ENCODE measurements at regions of chr12 and their contacts with region 1.

Region 1: GRCh38 chr12:53079226-53080117 is at the start of gene SPRYD3:
- DNase-seq: peak; percentile 99
- ATAC-seq: peak; percentile 98
- H3K4me3 Mint-ChIP-seq: peak within 1 kb of the TSS; percentile 93
- H3K27ac Mint-ChIP-seq: peak within 1 kb of the TSS; percentile 93
- H3K4me1 Mint-ChIP-seq: peaks cover 15% of the 10 kb centered on the region
- H3K27me3 Mint-ChIP-seq: no peaks in the 10 kb centered on the region
- total RNA-seq, gene SPRYD3: 34.4 to 37.8 TPM

Region 2: GRCh38 chr12:52903285-52903854 is 176.1 kb before region 1 on chr12:
- POLR2A ChIA-PET with region 1: no interaction called
- DNase-seq: peak; percentile 74
- ATAC-seq: peak; percentile 91
- H3K4me3 Mint-ChIP-seq: peak overlapping the region; percentile 49
- H3K27ac Mint-ChIP-seq: peak overlapping the region; percentile 30
- H3K4me1 Mint-ChIP-seq: peaks cover 9% of the 10 kb centered on the region
- H3K27me3 Mint-ChIP-seq: no peaks in the 10 kb centered on the region

Region 3: GRCh38 chr12:53054112-53054833 is 25.2 kb before region 1 on chr12:
- POLR2A ChIA-PET with region 1: interaction called, 17 read pairs
- DNase-seq: peak; percentile 92
- ATAC-seq: peak; percentile 88
- H3K4me3 Mint-ChIP-seq: peak overlapping the region; percentile 91
- H3K27ac Mint-ChIP-seq: peak overlapping the region; percentile 88
- H3K4me1 Mint-ChIP-seq: peaks cover 11% of the 10 kb centered on the region
- H3K27me3 Mint-ChIP-seq: peaks cover 4% of the 10 kb centered on the region

Region 4: GRCh38 chr12:53065975-53066931 is 13.2 kb before region 1 on chr12:
- POLR2A ChIA-PET with region 1: interaction called, 10 read pairs
- DNase-seq: peak; percentile 72
- ATAC-seq: peak; percentile 69
- H3K4me3 Mint-ChIP-seq: no peak overlapping the region
- H3K27ac Mint-ChIP-seq: peak overlapping the region; percentile 66
- H3K4me1 Mint-ChIP-seq: peaks cover 6% of the 10 kb centered on the region
- H3K27me3 Mint-ChIP-seq: peaks cover under 1% of the 10 kb centered on the region